CD4-positive, alpha-beta memory T cell (primary cell): ENCODE measurements at regions of chr7 and their contacts with region 1.

Region 1: DNA sequence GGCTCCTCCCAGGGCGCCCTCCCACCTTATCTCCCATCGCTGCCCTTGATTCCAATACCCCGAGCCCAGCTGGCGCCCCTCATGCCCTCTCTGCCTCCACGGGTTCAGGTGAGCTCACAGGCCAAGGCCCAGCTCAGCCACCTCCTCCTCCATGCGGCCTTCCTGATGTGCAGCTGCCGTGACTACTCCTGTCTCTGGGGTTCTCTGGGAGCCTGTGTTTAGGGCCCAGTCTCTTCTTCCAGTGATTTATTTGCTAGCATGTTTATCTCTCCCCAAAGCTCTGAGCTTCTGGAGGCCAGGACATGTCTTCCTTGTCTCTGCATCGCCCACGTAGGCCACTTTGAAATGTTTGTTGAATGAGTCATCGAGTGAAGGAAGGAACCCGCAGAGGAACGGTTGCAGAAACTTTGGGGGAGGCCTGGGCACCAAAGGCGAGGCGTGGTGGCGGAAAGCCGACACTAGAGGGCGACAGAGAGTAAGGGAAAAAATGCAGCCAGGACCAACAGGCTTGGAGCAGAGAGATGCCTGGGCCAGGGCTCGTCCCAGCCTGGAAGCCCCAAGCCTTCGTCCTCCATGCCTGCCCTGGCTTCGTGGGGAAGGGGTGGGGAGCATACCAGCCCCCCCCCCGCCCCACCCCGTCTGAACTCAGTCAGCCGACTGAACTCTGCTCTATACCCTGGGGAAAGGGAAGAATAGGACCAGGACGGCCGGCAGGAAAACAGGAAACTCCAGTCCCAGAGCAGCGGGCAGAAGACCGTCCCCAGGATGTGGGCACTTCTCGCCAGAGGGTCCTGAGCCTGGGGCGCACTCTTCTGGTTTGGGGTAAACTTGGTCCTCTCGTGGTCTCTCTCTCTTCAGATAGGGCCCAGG is 10.9 kb upstream of the HSPB1 start:
- DNase-seq: peak; percentile 73 to 84 (median 79)
- H3K4me3 ChIP-seq: no peak overlapping the region
- H3K4me3 Mint-ChIP-seq: no peak overlapping the region
- H3K27ac ChIP-seq: no peak overlapping the region
- H3K27ac Mint-ChIP-seq: peak overlapping the region in 2 of 7 donors; percentile 34 to 72
- H3K4me1 ChIP-seq: peaks cover 7% of the 10 kb centered on the region
- H3K4me1 Mint-ChIP-seq: peaks cover 3 to 9% (median 6%) of the 10 kb centered on the region in 4 donors
- H3K27me3 ChIP-seq: no peaks in the 10 kb centered on the region
- H3K27me3 Mint-ChIP-seq: no peaks in the 10 kb centered on the region

Region 2: DNA sequence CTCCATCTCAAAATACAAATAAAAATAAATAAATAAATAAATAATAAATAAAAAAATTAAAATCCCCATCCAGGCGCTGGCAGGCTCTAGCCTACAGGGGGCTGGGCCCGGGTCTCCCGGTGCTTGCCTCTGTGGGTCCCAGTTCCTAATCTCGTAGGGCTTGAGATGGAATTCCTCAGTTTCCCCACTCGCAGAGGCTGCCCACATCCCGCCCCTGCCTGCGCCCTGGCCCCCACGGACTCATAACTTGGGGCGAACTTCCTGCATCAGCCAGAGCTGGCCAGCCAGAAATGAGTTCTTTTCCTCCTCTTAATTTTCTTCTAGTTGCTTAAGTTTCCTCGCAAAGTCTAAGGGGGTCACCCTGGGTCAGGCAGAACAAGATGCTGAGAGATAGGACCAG is 111.9 kb before region 1 on chr7:
- CTCF ChIA-PET with region 1: interaction called, 6 read pairs
- POLR2A ChIA-PET with region 1: no interaction called
- intact Hi-C with region 1: loop called (anchors 1 kb)
- DNase-seq: no peak
- H3K4me3 ChIP-seq: no peak overlapping the region
- H3K4me3 Mint-ChIP-seq: no peak overlapping the region
- H3K27ac ChIP-seq: no peak overlapping the region
- H3K27ac Mint-ChIP-seq: no peak overlapping the region
- H3K4me1 ChIP-seq: no peaks in the 10 kb centered on the region
- H3K4me1 Mint-ChIP-seq: peaks cover 0 to 6% (median 4%) of the 10 kb centered on the region in 4 donors
- H3K27me3 ChIP-seq: no peaks in the 10 kb centered on the region
- H3K27me3 Mint-ChIP-seq: peaks cover 0 to 3% of the 10 kb centered on the region in 2 donors

Region 3: DNA sequence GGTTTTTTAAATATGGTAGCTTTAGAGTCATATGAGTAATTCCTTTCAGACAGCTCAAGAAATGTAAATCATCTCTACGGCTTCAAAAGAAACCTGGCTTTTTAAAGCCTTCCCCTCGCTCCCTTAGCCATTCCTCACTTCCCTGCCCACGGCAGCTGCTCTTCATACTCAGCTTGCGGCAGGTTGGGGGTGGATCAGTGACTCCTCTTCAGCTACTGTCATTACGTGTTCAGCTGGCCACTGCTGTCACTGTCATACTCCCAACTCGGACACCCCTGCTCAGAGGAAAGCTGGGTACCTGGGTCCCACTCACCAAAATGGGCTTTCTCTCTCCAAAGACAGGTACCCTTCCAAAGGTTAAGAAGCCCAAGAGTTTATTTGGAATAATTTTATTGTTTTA is 60.6 kb after region 1 on chr7:
- CTCF ChIA-PET with region 1: interaction called, 15 read pairs
- POLR2A ChIA-PET with region 1: no interaction called
- intact Hi-C with region 1: no loop called
- DNase-seq: no peak
- H3K4me3 ChIP-seq: no peak overlapping the region
- H3K4me3 Mint-ChIP-seq: peak overlapping the region in 4 of 8 donors; percentile 10 to 53 (median 34)
- H3K27ac ChIP-seq: no peak overlapping the region
- H3K27ac Mint-ChIP-seq: peak overlapping the region in 2 of 7 donors; percentile 48 to 51
- H3K4me1 ChIP-seq: peaks cover 74% of the 10 kb centered on the region
- H3K4me1 Mint-ChIP-seq: peaks cover 48 to 82% (median 65%) of the 10 kb centered on the region in 4 donors
- H3K27me3 ChIP-seq: no peaks in the 10 kb centered on the region
- H3K27me3 Mint-ChIP-seq: no peaks in the 10 kb centered on the region